Activated CD4-positive, alpha-beta memory T cell treated with anti-CD3 and anti-CD28 coated beads, Interleukin-2, amount 10 ng/mL, durations not matched to agents 7 days and 5 days (primary cell): ENCODE measurements at regions of chr3 and their contacts with region 1.

Region 1: DNA sequence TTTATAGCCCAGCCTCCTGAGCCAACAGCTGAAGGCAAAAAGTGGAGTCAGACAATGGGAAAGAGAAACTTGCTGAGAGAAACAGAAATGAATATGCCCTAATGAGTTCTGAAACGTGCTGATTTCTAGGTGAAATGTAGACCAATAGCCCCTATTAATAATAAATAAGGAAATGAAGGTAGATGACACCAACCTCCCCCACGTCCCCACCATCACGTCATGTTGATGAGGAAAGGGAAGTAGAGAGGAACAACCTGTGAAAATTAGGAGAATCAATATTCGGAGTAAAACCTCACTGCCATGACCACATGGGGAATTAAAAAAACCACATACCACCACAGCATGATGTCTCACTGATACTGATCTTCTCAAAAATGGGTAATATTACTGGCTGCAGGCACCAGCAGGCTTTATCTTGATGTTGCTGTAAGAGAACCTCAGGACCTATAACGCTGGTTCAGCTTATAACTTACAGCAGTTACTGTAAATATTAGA is 64.0 kb downstream of the KAT2B start:
- DNase-seq: peak; percentile 76
- H3K4me3 Mint-ChIP-seq: peak overlapping the region; percentile 65
- H3K27ac Mint-ChIP-seq: peak overlapping the region; percentile 96
- H3K4me1 Mint-ChIP-seq: peaks cover 89% of the 10 kb centered on the region
- H3K27me3 Mint-ChIP-seq: no peaks in the 10 kb centered on the region

Region 2: GRCh38 chr3:19946832-19947548 is 157.2 kb before region 1 on chr3 and contains the start of gene RAB5A:
- CTCF ChIA-PET with region 1: interaction called, 3 read pairs
- POLR2A ChIA-PET with region 1: interaction called, 14 read pairs
- DNase-seq: peak; percentile 98
- H3K4me3 Mint-ChIP-seq: peak within 1 kb of the TSS; percentile 89
- H3K27ac Mint-ChIP-seq: peak within 1 kb of the TSS; percentile 99
- H3K4me1 Mint-ChIP-seq: peaks cover 40% of the 10 kb centered on the region
- H3K27me3 Mint-ChIP-seq: no peaks in the 10 kb centered on the region
- total RNA-seq, gene RAB5A: 60.0 to 64.5 TPM

Region 3: GRCh38 chr3:20039766-20040475 is 64.3 kb before region 1 on chr3 and contains the start of gene KAT2B:
- CTCF ChIA-PET with region 1: interaction called, 20 read pairs
- POLR2A ChIA-PET with region 1: interaction called, 214 read pairs
- DNase-seq: peak; percentile 83
- H3K4me3 Mint-ChIP-seq: peak within 1 kb of the TSS; percentile 90
- H3K27ac Mint-ChIP-seq: peak within 1 kb of the TSS; percentile 97
- H3K4me1 Mint-ChIP-seq: peaks cover 51% of the 10 kb centered on the region
- H3K27me3 Mint-ChIP-seq: no peaks in the 10 kb centered on the region
- total RNA-seq, gene KAT2B: 129 to 134 TPM

Region 4: GRCh38 chr3:20054549-20054987 is 49.6 kb before region 1 on chr3:
- CTCF ChIA-PET with region 1: interaction called, 5 read pairs
- POLR2A ChIA-PET with region 1: interaction called, 116 read pairs
- DNase-seq: peak; percentile 84
- H3K4me3 Mint-ChIP-seq: no peak overlapping the region
- H3K27ac Mint-ChIP-seq: no peak overlapping the region
- H3K4me1 Mint-ChIP-seq: peaks cover 37% of the 10 kb centered on the region
- H3K27me3 Mint-ChIP-seq: no peaks in the 10 kb centered on the region

Region 5: DNA sequence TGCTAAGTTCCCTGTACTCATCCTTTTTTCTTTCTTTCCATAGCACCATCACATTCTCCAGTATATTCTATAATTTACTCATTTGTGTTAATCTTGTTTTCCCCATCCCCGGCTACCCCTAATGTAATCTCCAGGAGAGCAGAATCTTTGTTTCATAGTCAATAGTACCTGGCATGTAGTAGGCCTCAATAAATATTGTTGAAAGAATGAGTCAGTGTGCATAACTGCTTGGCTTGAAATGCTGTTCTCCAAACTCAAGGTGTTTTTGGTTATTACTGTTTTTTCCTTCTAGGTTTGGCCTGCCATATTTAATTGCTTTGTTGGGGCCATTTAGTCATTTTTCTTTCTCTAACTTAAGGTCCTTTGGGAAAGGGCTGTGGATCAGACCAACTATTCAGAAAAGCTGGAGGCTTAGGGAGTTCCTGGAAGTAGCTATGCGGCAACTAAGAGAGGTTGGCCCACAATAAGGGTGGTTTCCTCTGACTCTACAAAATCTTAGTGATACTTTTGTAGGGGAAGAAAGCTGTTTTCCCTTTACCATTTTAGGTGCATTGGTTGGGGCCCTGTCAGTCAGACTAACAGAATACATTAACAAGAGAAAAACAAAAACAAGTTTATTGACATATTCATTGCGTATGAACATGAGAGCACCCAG is 35.6 kb before region 1 on chr3:
- CTCF ChIA-PET with region 1: no interaction called
- POLR2A ChIA-PET with region 1: interaction called, 11 read pairs
- DNase-seq: no peak
- H3K4me3 Mint-ChIP-seq: no peak overlapping the region
- H3K27ac Mint-ChIP-seq: peak overlapping the region; percentile 67
- H3K4me1 Mint-ChIP-seq: peaks cover 50% of the 10 kb centered on the region
- H3K27me3 Mint-ChIP-seq: no peaks in the 10 kb centered on the region

Region 6: DNA sequence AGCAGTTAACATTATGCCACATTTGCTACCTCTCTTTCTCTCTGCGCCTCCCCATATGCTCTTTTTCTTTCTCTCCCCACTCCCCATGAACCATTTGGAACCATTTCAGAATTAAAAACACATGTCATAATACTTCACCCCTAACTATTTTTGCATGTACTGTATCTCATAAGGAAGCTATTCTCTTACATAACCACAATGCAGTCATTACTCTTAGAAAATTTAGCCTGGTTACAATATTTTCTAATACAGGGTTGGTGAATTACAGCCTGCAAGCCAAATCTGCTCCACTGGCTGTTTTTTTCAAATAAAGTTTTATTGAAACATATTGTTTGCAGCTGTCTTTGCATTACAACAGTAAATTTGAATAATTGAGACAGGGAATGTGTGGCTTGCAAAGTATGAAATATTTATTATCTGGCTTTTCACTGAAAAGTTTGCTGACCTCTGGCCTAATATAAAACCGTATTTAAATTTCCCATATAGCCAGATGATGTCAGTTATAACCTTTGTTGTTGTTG is 19.0 kb after region 1 on chr3:
- CTCF ChIA-PET with region 1: interaction called, 3 read pairs
- POLR2A ChIA-PET with region 1: interaction called, 10 read pairs
- DNase-seq: no peak
- H3K4me3 Mint-ChIP-seq: no peak overlapping the region
- H3K27ac Mint-ChIP-seq: no peak overlapping the region
- H3K4me1 Mint-ChIP-seq: peaks cover 6% of the 10 kb centered on the region
- H3K27me3 Mint-ChIP-seq: no peaks in the 10 kb centered on the region

Region 7: DNA sequence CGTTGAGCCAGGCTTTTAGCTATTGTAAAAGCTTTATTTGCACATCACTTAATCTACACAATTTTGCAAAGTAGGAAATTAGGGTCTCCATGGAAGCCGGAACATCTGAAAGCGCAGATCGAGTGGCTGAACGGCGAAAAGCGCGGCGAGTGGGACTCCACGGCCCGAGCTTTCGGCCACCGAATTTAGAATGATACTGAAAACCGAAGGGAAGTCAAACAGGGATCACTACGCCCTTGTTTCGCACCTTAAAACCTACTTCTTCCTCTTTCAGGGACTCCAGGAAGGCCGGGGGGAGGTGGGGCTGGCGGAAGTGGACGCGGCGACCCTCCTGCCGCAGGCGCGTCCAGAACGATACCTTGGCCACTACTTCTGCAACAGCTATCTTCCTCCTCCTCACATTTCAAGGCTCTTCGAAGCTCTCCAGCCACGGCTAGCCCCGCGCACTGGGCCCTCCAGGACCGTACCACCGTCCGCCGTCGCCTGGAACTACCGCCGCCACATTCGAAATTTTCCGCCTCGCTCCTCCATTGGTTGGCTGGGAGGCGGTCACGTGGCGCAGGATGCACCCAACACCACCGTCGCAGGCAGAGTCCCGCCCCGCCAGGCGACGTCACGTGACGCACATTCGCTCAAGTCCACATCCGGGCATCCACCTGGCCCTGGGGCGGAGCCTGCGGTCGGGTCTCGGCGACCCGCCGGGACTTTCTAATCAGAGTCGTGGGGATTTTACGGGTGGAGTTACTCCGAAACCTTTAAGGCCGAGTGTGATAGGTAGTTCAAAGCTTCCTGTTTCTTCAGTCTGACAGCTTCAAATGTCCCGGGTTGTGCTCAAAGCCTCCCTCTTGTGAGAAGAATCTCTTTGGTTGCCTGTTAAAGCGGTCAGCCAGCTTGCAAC is 81.7 kb after region 1 on chr3 and contains the start of gene SGO1:
- CTCF ChIA-PET with region 1: interaction called, 3 read pairs
- POLR2A ChIA-PET with region 1: interaction called, 55 read pairs
- DNase-seq: peak; percentile 100
- H3K4me3 Mint-ChIP-seq: no peak within 1 kb of the TSS
- H3K27ac Mint-ChIP-seq: no peak within 1 kb of the TSS
- H3K4me1 Mint-ChIP-seq: peaks cover 31% of the 10 kb centered on the region
- H3K27me3 Mint-ChIP-seq: no peaks in the 10 kb centered on the region
- total RNA-seq, gene SGO1: 38.3 to 39.4 TPM